Activated CD8-positive, alpha-beta T cell treated with anti-CD3 and anti-CD28 coated beads, Interleukin-2, amount 10 ng/mL, durations not matched to agents 7 days and 5 days (primary cell): ENCODE measurements at regions of chr11 and their contacts with region 1.

Region 1: DNA sequence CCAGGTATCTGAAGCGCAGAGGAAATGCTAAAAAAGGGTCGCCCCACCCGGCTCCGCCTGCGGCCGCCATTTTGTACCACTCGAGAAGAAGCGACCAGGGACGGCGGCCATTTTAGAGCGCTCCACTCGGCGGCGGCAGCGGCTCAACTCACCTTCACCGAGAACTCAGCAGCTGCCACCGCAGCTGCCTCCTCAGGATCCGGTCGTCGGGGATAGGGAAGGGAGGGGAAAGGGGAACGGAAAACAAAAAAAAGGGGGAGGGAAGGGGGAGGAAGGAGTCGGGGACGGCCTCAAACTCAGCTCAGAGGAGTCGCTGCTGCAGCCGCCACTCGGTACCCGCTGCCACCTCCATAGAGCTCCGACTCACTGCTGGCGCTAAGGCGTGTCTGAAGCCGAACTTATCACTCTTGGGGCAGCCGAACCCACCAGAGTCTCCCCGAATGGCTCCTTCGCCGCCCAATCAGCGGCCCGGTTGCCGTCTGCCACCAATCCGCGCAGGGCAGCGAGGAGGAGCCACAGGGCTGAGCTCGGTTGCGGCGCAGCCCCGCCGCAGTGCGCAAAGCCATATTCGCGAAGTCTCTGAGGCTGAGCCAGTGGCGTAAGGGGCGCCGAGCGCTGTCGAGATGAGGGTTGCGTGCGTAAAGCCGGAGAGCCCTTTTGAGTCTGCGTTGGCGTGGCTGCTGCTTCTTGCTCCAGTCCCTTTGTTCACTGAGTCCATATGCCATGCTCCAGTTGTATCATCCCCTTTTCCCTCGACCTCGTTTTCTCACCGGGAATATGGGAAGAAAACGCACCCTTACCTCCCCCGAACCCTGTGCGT is at the start of gene EIF4G2:
- DNase-seq: peak; percentile 98
- ATAC-seq: peak; percentile 94
- H3K4me3 Mint-ChIP-seq: peak within 1 kb of the TSS; percentile 86
- H3K27ac Mint-ChIP-seq: peak within 1 kb of the TSS; percentile 98
- H3K4me1 Mint-ChIP-seq: peaks cover 47% of the 10 kb centered on the region
- H3K27me3 Mint-ChIP-seq: no peaks in the 10 kb centered on the region
- total RNA-seq, gene EIF4G2: 667 to 682 TPM

Region 2: GRCh38 chr11:10680956-10681487 is 127.7 kb before region 1 on chr11:
- CTCF ChIA-PET with region 1: no interaction called
- POLR2A ChIA-PET with region 1: no interaction called
- DNase-seq: no peak
- ATAC-seq: no peak
- H3K4me3 Mint-ChIP-seq: no peak overlapping the region
- H3K27ac Mint-ChIP-seq: no peak overlapping the region
- H3K4me1 Mint-ChIP-seq: no peaks in the 10 kb centered on the region
- H3K27me3 Mint-ChIP-seq: peaks cover 16% of the 10 kb centered on the region

Region 3: GRCh38 chr11:10770626-10771254 is 38.0 kb before region 1 on chr11:
- CTCF ChIA-PET with region 1: interaction called, 10 read pairs
- POLR2A ChIA-PET with region 1: interaction called, 4 read pairs
- DNase-seq: peak; percentile 54
- ATAC-seq: peak; percentile 53
- H3K4me3 Mint-ChIP-seq: no peak overlapping the region
- H3K27ac Mint-ChIP-seq: no peak overlapping the region
- H3K4me1 Mint-ChIP-seq: no peaks in the 10 kb centered on the region
- H3K27me3 Mint-ChIP-seq: no peaks in the 10 kb centered on the region

Region 4: DNA sequence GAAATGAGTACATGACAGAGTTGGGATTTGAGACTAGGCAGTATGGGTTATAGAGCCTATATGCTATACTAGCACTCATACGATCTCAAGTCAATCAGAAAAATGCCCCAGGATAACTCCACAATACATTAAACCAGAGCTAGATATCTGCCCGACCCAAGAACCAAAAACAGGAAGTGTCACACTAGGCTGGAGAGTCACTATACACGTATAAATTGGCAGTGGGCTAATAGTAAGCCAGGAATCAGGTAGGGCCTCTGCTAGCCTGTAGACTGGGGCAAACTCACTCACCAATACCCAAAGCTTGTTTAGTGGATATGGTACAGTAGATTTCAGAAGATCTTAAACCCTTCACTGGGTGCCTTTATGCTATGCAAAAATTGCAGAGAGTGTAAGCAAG is 16.1 kb after region 1 on chr11:
- CTCF ChIA-PET with region 1: no interaction called
- POLR2A ChIA-PET with region 1: interaction called, 14 read pairs
- DNase-seq: no peak
- ATAC-seq: no peak
- H3K4me3 Mint-ChIP-seq: no peak overlapping the region
- H3K27ac Mint-ChIP-seq: no peak overlapping the region
- H3K4me1 Mint-ChIP-seq: peaks cover 5% of the 10 kb centered on the region
- H3K27me3 Mint-ChIP-seq: no peaks in the 10 kb centered on the region

Region 5: DNA sequence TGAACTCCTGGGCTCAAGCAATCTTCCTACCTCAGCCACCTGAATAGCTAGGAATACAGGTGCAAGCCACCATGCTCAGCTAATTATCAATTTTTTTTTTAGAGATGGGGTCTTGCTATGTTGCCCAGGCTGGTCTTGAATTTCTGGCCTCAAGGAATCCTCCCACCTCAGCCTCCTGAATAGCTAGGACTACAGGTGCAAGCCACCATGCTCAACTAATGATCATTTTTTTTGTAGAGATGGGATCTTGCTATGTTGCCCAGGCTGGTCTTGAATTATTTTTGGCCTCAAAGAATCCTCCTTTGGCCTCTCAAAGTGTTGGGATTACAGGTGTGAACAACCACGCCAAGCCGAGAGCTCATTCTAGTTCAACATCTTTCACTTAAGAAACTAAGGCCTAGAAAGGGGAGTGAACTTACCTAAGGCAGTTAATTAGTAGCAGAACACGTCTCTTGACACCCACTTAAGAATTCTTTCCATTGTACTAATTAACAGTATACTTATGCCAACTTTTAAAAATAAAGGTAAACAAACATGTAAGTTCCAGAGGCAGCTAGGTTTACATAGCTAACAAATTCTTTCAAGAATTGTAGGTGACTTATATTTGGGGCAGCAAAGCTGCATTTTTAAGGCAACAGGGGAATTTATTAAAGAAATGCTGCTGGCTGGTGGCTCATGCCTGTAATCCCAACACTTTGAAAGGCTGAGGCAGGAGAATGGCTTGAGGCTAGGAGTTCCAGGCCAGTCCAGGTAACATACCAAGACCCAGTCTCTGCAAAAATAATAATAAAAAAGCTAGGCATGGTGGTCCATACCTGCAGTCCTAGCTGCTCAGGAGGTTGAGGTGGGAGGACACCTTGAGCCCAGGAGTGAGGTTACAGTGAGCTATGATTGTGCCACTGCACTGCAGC is 39.5 kb after region 1 on chr11:
- CTCF ChIA-PET with region 1: interaction called, 7 read pairs
- POLR2A ChIA-PET with region 1: interaction called, 21 read pairs
- DNase-seq: no peak
- ATAC-seq: no peak
- H3K4me3 Mint-ChIP-seq: no peak overlapping the region
- H3K27ac Mint-ChIP-seq: no peak overlapping the region
- H3K4me1 Mint-ChIP-seq: peaks cover 14% of the 10 kb centered on the region
- H3K27me3 Mint-ChIP-seq: no peaks in the 10 kb centered on the region

Region 6: DNA sequence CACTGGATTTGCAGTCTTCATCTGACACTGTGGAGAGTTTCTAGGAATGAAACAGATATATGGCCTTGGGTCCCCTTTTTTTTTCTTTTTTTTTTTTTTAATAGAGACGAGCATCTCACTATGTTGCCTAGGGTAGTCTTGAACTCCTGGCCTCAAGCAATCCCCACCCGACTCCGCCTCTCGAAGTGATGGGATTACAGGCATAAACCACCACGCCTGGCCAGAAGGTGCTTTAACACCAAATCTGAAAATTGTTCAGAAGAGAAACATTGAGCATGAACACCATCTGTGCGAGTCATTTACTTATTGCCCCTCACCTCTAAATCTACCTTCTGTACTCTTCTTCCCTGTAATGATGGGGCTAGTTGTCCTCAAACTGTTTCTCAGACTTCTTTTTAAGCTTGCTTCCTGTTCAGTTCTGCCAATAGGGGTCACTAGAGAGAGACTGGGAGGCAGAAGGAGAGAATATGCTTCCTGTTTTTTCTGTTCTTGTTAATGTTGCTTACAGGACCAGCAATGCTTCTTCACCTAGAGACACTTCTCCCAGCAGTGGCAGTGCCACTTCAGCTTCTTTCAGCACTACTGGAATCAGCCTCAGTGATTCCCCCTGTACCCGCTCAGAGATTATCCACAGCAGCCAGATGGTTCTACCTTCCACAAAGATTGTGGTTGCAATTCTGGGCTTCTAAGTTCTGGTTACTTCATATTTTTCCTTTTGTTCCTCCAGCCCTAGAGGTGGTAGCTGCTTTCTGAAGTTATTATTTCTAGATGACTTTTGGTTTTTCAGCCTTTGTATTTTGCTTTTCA is 69.8 kb after region 1 on chr11:
- CTCF ChIA-PET with region 1: interaction called, 18 read pairs
- POLR2A ChIA-PET with region 1: interaction called, 10 read pairs
- DNase-seq: peak; percentile 40
- ATAC-seq: no peak
- H3K4me3 Mint-ChIP-seq: no peak overlapping the region
- H3K27ac Mint-ChIP-seq: peak overlapping the region; percentile 46
- H3K4me1 Mint-ChIP-seq: peaks cover 12% of the 10 kb centered on the region
- H3K27me3 Mint-ChIP-seq: no peaks in the 10 kb centered on the region

Region 7: GRCh38 chr11:10933455-10934292 is 124.9 kb after region 1 on chr11:
- CTCF ChIA-PET with region 1: interaction called, 5 read pairs
- POLR2A ChIA-PET with region 1: interaction called, 19 read pairs
- DNase-seq: peak; percentile 85
- ATAC-seq: peak; percentile 79
- H3K4me3 Mint-ChIP-seq: peak overlapping the region; percentile 70
- H3K27ac Mint-ChIP-seq: no peak overlapping the region
- H3K4me1 Mint-ChIP-seq: peaks cover 18% of the 10 kb centered on the region
- H3K27me3 Mint-ChIP-seq: peaks cover 43% of the 10 kb centered on the region